ENCODE measurements at regions of chr15 and their contacts with region 1.

Region 1: DNA sequence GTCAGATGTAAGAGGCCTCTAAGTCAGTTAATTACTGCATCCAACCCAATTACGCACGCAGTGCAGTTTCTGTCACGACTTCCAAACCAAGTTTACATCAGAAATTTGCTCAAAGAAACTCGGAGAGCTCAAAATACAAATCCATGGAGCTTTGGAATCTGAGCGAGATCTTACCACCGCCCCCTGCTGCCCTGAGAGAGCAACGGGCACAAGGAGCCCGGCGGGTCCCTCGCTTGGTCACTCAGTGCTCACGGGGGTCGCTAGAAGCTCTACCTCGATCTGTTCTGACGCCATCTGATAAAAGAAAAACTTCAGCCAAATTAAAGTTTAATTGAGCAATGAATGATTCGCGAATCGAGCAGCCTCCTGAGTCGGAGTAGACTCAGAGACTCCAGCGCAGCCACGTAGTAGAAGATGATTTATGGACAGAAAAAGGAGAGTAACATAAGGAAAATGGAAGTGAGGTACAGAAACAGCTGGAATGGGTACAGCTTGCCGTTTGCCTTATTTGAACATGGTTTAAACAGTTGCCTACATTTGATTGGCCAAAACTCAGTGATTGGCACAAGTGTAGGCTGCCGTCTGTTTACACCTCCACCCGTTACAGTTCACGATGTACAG is 232.7 kb upstream of the ATP10A start:
- DNase-seq: no peak
- H3K4me3 ChIP-seq: no peak overlapping the region
- H3K27ac ChIP-seq: no peak overlapping the region
- H3K4me1 ChIP-seq: no peaks in the 10 kb centered on the region
- H3K27me3 ChIP-seq: no peaks in the 10 kb centered on the region
- CTCF ChIP-seq: peak in 2 of 3 experiments; percentile 18 to 37

Region 2: DNA sequence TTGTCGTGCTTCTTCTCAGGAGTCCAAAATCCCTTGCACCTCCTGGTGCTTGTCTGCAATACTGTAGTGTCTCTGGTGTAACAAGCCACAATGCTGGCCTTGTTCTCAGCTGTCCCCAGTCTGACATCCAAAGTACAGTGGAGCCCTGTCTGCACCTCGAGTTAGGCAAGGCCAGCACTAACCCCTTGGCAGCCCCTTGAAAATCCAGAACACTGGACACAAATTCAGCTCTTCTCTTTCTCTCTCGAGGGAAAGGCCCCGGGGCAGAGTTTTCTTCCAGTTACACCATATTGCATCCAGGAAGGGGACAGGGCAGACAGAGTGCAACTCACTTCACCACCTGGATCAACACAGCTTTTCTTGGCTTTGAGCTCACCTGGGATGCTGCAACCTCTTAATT is 141.4 kb before region 1 on chr15:
- intact Hi-C with region 1: loop called (anchors 10 kb)
- DNase-seq: no peak
- H3K4me3 ChIP-seq: no peak overlapping the region
- H3K27ac ChIP-seq: no peak overlapping the region
- H3K4me1 ChIP-seq: no peaks in the 10 kb centered on the region
- H3K27me3 ChIP-seq: no peaks in the 10 kb centered on the region
- CTCF ChIP-seq: no peak

Region 3: DNA sequence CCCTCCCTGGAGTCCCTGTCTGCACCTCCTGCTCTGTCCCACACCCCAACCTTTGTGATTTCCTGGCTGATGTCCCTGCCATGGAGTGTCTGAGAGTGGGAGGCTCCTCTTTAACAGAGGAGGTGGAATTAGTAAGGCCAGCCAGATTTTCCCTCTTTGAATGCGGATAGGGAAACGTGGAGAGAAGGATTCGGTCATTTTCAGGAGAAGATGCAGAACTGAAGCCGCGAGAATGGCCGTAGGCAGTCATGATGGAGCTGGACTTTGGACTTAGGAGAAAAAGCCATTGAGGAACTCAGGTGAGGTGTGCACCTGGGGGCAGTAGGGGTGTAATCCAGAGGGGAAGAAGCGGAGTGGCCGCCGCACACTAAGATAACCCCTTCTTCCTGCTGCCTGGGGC is 94.6 kb before region 1 on chr15:
- intact Hi-C with region 1: no loop called
- DNase-seq: no peak
- H3K4me3 ChIP-seq: no peak overlapping the region
- H3K27ac ChIP-seq: no peak overlapping the region
- H3K4me1 ChIP-seq: no peaks in the 10 kb centered on the region
- H3K27me3 ChIP-seq: no peaks in the 10 kb centered on the region
- CTCF ChIP-seq: no peak

Region 4: DNA sequence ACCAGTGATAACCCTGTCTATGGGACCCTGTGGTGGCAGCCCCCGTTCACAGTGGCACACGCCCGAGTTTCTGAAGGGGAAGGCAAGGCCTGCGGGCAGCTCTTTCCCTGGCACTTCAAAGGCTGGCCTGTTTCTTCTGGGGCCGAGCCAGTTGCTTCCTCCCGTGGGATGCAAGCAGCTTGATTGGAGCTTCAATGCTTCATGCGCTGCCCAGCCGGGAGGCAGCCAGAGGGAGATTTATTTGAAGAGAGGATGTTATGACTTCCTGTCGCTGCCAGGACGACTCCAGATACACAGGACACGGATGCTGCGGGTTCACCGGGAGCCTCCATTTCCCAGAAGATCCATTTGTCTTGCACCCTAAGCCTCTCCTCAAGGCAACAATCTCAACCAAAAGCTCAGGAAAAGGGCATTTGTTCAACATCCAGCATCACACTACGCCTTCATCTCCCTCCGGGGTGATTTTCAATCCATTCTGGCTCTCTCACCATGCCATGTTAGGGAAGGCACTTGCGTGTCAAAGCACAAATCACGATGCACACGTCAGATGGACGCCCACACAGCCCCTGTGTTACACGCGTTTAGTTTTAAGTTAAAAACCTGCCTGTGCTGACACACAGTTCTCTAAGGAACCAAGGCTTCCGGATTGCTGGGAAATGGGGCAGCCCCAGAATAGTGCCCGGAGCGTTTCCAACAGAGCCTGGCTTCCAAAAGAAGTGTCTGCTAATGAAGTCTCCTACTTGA is 1673.1 kb after region 1 on chr15:
- intact Hi-C with region 1: no loop called
- DNase-seq: no peak
- H3K4me3 ChIP-seq: no peak overlapping the region
- H3K27ac ChIP-seq: no peak overlapping the region
- H3K4me1 ChIP-seq: no peaks in the 10 kb centered on the region
- H3K27me3 ChIP-seq: no peaks in the 10 kb centered on the region
- CTCF ChIP-seq: no peak

Measured in ascending aorta (tissue), 2 donors.